ENCODE measurements at regions of chr2 and their contacts with region 1.

Region 1: GRCh38 chr2:240704651-240705050 is 13.0 kb downstream of the AQP12A start:
- DNase-seq: no peak
- ATAC-seq: no peak
- H3K4me3 ChIP-seq: no peak overlapping the region
- H3K27ac ChIP-seq: no peak overlapping the region
- H3K4me1 ChIP-seq: no peaks in the 10 kb centered on the region
- H3K27me3 ChIP-seq: peaks cover 37% of the 10 kb centered on the region
- CTCF ChIP-seq: no peak
- POLR2A ChIP-seq: no peak
- RAD21 ChIP-seq: no peak

Region 2: DNA sequence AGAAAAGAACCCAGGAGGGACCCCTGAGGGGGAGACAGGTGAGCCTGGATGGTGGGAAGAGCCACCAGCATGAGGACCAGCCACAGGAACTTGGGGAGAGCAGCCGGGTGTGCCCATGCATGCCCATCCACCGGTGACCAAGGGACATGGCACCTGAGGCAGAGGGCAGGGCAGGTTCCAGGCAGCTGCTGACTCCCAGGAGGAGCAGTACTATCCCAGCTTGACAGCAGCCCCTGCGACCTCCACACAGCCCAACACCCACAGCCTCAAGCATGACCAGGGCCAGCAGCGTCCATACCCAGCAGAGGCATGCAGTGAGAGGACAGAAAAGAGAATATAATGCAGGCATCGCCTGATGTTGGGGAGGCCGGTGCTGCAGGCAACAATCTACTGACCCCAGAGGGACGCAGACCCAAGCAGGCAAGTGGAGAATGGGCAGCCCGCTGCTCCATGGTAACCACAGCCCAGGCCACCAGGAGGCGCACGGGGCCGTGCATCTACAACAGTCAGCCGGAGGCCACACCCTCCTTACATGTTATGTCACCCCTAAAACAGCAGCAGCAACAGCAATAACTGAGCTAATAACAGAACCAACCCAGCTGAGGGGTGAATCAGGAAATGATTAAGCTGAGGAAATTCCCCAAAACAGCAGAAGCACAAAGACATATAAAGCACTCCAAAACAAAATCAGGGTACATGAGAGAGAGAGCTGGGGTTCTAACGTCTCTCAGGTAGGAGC is 190.9 kb before region 1 on chr2:
- CTCF ChIA-PET with region 1: interaction called, 3 read pairs
- POLR2A ChIA-PET with region 1: no interaction called
- dilution Hi-C with region 1: no loop called
- in situ Hi-C with region 1: loop called (anchors 5 kb)
- intact Hi-C with region 1: loop called (anchors 5 kb)
- DNase-seq: peak; percentile 88
- ATAC-seq: peak; percentile 100
- H3K4me3 ChIP-seq: no peak overlapping the region
- H3K27ac ChIP-seq: no peak overlapping the region
- H3K4me1 ChIP-seq: peaks cover 1% of the 10 kb centered on the region; the same call in 1 of the 2 replicates
- H3K27me3 ChIP-seq: no peaks in the 10 kb centered on the region
- CTCF ChIP-seq: peak; percentile 95
- POLR2A ChIP-seq: 0 out of 2 replicates have a peak, but pooled peaks have one; percentile 32
- RAD21 ChIP-seq: peak; percentile 93

Region 3: DNA sequence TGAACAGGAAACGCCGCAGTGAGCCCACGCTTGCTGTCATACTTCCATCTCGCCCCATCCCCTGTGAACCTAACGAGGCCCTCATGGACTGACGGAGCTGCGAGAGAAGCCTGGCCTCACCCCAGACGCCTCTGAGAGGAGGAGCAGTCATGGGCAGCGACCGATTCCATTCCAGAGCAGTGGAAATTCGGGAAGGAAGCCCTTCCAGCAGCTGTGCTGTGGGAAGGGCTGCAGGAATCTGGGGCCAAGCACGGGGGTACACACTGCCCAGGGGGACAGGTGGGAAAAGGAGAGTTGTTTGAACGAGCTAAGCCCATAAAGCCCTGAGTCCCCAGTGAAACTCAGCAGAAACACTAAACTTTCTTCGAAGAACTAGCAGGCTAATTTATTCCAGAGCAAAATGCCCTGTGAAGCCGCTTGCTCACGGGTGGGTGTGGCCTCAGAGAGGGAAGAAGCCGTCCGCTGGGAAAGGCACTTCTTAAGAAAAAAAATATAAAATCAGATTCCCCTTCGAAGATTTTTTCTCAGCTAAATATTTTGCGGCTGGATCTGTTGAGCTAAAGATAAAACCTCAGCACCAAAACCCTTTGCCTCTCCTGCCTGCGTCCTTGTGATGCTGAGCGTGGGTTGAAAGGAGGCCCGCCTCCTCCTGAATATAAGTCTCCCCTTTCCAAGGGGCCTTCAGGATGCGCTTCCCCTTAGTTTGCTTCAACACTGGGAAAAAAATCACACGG is 185.1 kb before region 1 on chr2:
- CTCF ChIA-PET with region 1: no interaction called
- POLR2A ChIA-PET with region 1: no interaction called
- dilution Hi-C with region 1: no loop called
- in situ Hi-C with region 1: loop called (anchors 5 kb)
- intact Hi-C with region 1: loop called (anchors 5 kb)
- DNase-seq: peak; percentile 40
- ATAC-seq: peak; percentile 74
- H3K4me3 ChIP-seq: no peak overlapping the region
- H3K27ac ChIP-seq: no peak overlapping the region
- H3K4me1 ChIP-seq: no peaks in the 10 kb centered on the region
- H3K27me3 ChIP-seq: no peaks in the 10 kb centered on the region
- CTCF ChIP-seq: no peak
- POLR2A ChIP-seq: no peak
- RAD21 ChIP-seq: no peak